ENCODE measurements at regions of chr22 and their contacts with region 1.

Region 1: DNA sequence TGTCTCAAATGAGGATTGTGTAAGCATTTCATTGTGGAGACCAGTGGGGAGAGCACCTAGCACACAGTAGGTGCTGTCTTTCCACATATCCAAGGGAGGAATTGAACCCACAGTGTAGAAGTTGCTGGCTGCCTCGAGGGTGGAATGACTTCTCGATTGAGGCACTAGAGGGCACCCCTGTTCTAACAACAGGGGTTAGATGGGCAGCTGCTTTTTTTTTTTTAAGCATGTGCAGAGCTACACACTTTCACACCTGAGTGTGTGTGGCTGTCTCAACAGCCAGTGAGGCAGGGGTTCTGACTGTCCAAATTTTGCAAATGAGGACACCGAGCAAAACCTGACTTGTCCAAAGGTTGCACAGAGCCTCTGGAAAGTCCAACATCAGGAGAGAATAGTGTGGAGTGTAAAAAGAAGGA is 118.2 kb upstream of the CRYBB3 start:
- DNase-seq: peak in 4 of 5 donors; percentile 22 to 66 (median 40)
- H3K4me3 ChIP-seq: no peak overlapping the region
- H3K4me3 Mint-ChIP-seq: peak overlapping the region in 1 of 7 donors; percentile 29
- H3K27ac ChIP-seq: no peak overlapping the region
- H3K27ac Mint-ChIP-seq: peak overlapping the region in 4 of 8 donors; percentile 66 to 81 (median 76)
- H3K4me1 ChIP-seq: peaks cover 35% of the 10 kb centered on the region
- H3K4me1 Mint-ChIP-seq: peaks cover 50 to 73% (median 70%) of the 10 kb centered on the region in 3 donors
- H3K27me3 ChIP-seq: no peaks in the 10 kb centered on the region
- H3K27me3 Mint-ChIP-seq: peaks cover 0 to 2% of the 10 kb centered on the region in 2 donors

Region 2: DNA sequence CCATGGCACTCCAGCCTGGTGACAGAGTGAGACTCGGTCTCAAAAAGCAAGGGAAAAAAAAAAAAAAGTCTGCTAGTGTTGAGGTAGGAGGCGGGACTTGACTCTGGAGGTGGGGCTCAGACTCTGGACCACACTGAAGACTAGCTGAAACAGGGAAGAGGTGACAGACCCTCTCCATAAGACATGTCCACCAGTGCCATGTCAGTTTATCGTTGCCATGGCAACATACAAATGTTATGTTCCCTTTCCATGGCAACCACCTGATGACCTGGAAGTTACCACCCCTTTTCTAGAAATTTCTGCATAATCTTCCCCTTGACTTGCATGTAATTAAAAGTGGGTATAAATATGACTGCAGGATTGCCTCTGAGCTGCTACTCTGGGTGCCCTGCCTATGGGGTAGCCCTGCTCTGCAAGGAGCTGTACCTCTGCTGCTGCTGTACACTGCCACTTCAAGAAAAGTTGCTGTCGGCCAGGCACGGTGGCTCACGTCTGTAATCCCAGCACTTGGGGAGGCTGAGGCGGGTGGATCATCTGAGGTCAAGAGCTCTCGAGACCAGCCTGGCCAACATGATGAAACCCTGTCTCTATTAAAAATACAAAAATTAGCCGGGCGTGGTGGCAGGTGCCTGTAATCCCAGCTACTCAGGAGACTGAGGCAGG is 73.8 kb before region 1 on chr22:
- CTCF ChIA-PET with region 1: no interaction called
- POLR2A ChIA-PET with region 1: no interaction called
- DNase-seq: no peak
- H3K4me3 ChIP-seq: no peak overlapping the region
- H3K4me3 Mint-ChIP-seq: no peak overlapping the region
- H3K27ac ChIP-seq: no peak overlapping the region
- H3K27ac Mint-ChIP-seq: no peak overlapping the region
- H3K4me1 ChIP-seq: no peaks in the 10 kb centered on the region
- H3K4me1 Mint-ChIP-seq: peaks cover 0 to 6% (median under 1%) of the 10 kb centered on the region in 3 donors
- H3K27me3 ChIP-seq: no peaks in the 10 kb centered on the region
- H3K27me3 Mint-ChIP-seq: peaks cover 4% of the 10 kb centered on the region in 2 donors

Region 3: DNA sequence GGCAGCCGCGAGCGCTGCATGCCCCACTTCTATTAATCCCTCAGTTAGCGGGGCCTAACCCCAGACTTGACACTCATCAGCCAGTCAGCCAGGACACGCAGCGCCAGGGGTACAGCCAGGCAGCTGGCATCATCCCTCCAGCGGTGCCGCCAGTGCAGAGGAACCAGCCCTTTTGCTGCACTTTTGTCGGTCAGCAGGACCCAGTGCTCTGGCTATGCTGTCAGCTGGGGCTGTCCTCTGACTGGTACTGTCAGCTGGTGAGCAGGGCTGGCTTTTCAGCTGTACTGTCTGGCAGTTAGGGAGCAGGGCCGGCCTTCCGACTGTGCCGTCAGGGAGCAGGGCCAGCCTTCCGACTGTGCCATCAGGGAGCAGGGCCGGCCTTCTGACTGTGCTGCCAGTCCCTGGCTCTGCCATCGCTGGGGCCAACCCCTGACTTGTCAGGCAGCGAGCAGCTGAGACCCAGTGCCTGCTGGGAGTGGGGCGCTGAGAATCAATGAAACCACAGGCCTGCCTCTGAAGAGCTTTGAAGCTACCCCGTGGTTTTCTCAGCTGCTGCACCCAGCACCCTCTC is 13.5 kb before region 1 on chr22:
- CTCF ChIA-PET with region 1: interaction called, 71 read pairs
- POLR2A ChIA-PET with region 1: interaction called, 8 read pairs
- DNase-seq: peak; percentile 77 to 95 (median 92)
- H3K4me3 ChIP-seq: peak overlapping the region; percentile 29
- H3K4me3 Mint-ChIP-seq: peak overlapping the region; percentile 81 to 98 (median 92)
- H3K27ac ChIP-seq: peak overlapping the region; percentile 49
- H3K27ac Mint-ChIP-seq: peak overlapping the region; percentile 92 to 100 (median 98)
- H3K4me1 ChIP-seq: peaks cover 83% of the 10 kb centered on the region
- H3K4me1 Mint-ChIP-seq: peaks cover 78 to 96% (median 85%) of the 10 kb centered on the region in 3 donors
- H3K27me3 ChIP-seq: no peaks in the 10 kb centered on the region
- H3K27me3 Mint-ChIP-seq: no peaks in the 10 kb centered on the region